ENCODE measurements at regions of chr13 and their contacts with region 1.

Region 1: GRCh38 chr13:48210178-48210577 is 22.8 kb upstream of the ITM2B start:
- DNase-seq: no peak
- ATAC-seq: no peak
- H3K4me3 ChIP-seq: no peak overlapping the region
- H3K4me3 Mint-ChIP-seq: no peak overlapping the region
- H3K27ac ChIP-seq: no peak overlapping the region
- H3K27ac Mint-ChIP-seq: no peak overlapping the region
- H3K4me1 ChIP-seq: no peaks in the 10 kb centered on the region
- H3K4me1 Mint-ChIP-seq: peaks cover 14% of the 10 kb centered on the region
- H3K27me3 ChIP-seq: no peaks in the 10 kb centered on the region
- H3K27me3 Mint-ChIP-seq: no peaks in the 10 kb centered on the region
- CTCF ChIP-seq: no peak

Region 2: GRCh38 chr13:48199499-48199898 is 10.7 kb before region 1 on chr13:
- CTCF ChIA-PET with region 1: no interaction called
- POLR2A ChIA-PET with region 1: interaction called, 4 read pairs
- intact Hi-C with region 1: loop called in 1 of 2 experiments (anchors 2 kb)
- DNase-seq: no peak
- ATAC-seq: no peak
- H3K4me3 ChIP-seq: no peak overlapping the region
- H3K4me3 Mint-ChIP-seq: no peak overlapping the region
- H3K27ac ChIP-seq: no peak overlapping the region
- H3K27ac Mint-ChIP-seq: peak overlapping the region; percentile 6
- H3K4me1 ChIP-seq: peaks cover 15% of the 10 kb centered on the region
- H3K4me1 Mint-ChIP-seq: peaks cover 18% of the 10 kb centered on the region
- H3K27me3 ChIP-seq: no peaks in the 10 kb centered on the region
- H3K27me3 Mint-ChIP-seq: no peaks in the 10 kb centered on the region
- CTCF ChIP-seq: no peak

Region 3: GRCh38 chr13:48291730-48292129 is 81.6 kb after region 1 on chr13:
- CTCF ChIA-PET with region 1: no interaction called
- POLR2A ChIA-PET with region 1: no interaction called
- intact Hi-C with region 1: no loop called
- DNase-seq: no peak
- ATAC-seq: no peak
- H3K4me3 ChIP-seq: no peak overlapping the region
- H3K4me3 Mint-ChIP-seq: no peak overlapping the region
- H3K27ac ChIP-seq: no peak overlapping the region
- H3K27ac Mint-ChIP-seq: no peak overlapping the region
- H3K4me1 ChIP-seq: no peaks in the 10 kb centered on the region
- H3K4me1 Mint-ChIP-seq: no peaks in the 10 kb centered on the region
- H3K27me3 ChIP-seq: no peaks in the 10 kb centered on the region
- H3K27me3 Mint-ChIP-seq: no peaks in the 10 kb centered on the region
- CTCF ChIP-seq: no peak